ENCODE measurements at regions of chr3 and their contacts with region 1.

Region 1: GRCh38 chr3:100254168-100254777 is 6.5 kb upstream of the TBC1D23 start:
- DNase-seq: peak in 1 of 2 donors; percentile 81
- H3K4me3 ChIP-seq: no peak overlapping the region
- H3K27ac ChIP-seq: peak overlapping the region; percentile 44 to 63
- H3K4me1 ChIP-seq: peaks cover 0 to 9% of the 10 kb centered on the region in 2 donors
- H3K27me3 ChIP-seq: no peaks in the 10 kb centered on the region
- CTCF ChIP-seq: peak; percentile 80 to 93 (median 88)

Region 2: GRCh38 chr3:99833617-99834205 is 420.6 kb before region 1 on chr3:
- intact Hi-C with region 1: loop called (anchors 2 kb)
- DNase-seq: no peak
- H3K4me3 ChIP-seq: no peak overlapping the region
- H3K27ac ChIP-seq: peak overlapping the region; percentile 20 to 22
- H3K4me1 ChIP-seq: peaks cover 0 to 9% of the 10 kb centered on the region in 2 donors
- H3K27me3 ChIP-seq: no peaks in the 10 kb centered on the region
- CTCF ChIP-seq: no peak

Region 3: GRCh38 chr3:99842826-99843589 is 411.3 kb before region 1 on chr3:
- intact Hi-C with region 1: loop called (anchors 2 kb)
- DNase-seq: no peak
- H3K4me3 ChIP-seq: no peak overlapping the region
- H3K27ac ChIP-seq: peak overlapping the region; percentile 78 to 82
- H3K4me1 ChIP-seq: peaks cover 0 to 14% of the 10 kb centered on the region in 2 donors
- H3K27me3 ChIP-seq: no peaks in the 10 kb centered on the region
- CTCF ChIP-seq: peak; percentile 66 to 67 (median 67)

Region 4: DNA sequence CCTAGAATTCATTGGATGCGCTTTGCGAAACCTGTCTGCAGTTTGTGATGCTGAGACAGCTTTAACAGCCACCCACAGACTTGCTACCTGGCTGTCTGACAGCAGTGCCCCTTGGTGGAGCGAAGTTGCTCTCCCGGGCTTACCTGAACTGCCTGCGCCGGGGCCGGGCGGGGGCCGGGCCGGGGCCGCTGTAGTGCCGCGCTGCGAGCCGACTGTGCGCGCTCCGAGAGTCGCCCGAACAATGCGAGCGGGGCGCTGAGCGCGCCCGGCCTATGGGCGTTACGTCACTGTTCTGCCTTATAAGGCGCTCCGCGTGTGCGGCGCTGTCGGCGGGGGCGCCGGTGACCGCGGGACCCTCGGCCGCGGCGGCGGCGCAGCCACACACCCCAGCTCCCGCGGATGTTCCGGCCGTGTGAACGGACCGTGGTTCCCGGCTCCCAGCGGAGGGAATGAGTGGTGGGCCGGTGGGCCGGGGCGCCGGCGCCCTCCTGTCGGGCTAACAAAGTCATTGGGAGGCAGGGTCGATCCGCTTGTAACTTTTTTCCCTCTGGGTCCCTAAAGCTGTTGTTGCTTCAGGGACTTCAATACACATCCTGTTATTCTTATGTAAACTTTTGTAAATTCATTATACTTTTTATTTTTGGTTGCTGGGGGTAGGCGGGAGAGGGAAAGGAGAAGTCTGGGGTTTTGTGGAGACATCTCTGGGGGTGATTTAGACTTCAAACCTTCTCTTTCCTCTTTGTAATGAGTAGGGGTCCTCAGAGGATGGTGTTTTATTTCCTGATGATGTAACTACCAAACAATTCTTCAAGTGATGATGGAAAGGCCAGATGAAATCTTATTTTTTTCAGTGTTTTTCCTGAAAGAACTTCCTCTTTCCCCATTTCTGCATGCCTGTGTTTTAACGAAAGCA is 378.1 kb before region 1 on chr3:
- intact Hi-C with region 1: loop called (anchors 10 kb)
- DNase-seq: peak; percentile 39 to 91
- H3K4me3 ChIP-seq: peak overlapping the region; percentile 85 to 90
- H3K27ac ChIP-seq: peak overlapping the region; percentile 97 to 98
- H3K4me1 ChIP-seq: peaks cover 0 to 17% of the 10 kb centered on the region in 2 donors
- H3K27me3 ChIP-seq: no peaks in the 10 kb centered on the region
- CTCF ChIP-seq: no peak

Region 5: GRCh38 chr3:100047455-100048141 is 206.7 kb before region 1 on chr3:
- intact Hi-C with region 1: loop called (anchors 5 kb)
- DNase-seq: no peak
- H3K4me3 ChIP-seq: no peak overlapping the region
- H3K27ac ChIP-seq: peak overlapping the region; percentile 47 to 89
- H3K4me1 ChIP-seq: peaks cover 6 to 28% of the 10 kb centered on the region in 2 donors
- H3K27me3 ChIP-seq: no peaks in the 10 kb centered on the region
- CTCF ChIP-seq: no peak

Region 6: DNA sequence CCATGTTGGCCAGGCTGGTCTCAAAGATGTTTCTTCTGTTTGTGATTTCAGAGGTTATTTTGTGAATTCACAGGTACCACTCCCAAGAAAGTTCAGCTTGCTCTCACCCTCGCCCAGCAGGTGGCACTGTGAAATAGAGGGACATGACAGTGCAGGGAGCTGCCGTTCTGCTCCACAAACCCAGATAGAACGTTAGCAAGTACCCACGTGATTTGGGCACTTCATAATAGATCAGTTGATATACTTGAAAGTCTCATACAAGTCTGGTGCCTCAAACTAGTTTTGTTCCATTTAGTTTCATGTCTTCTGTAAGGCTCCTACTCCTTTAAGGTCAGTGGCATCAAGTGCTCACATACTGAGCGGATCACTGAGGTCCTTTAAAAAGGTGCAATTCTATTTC is 185.4 kb before region 1 on chr3:
- intact Hi-C with region 1: loop called (anchors 1 kb)
- DNase-seq: peak; percentile 54 to 93
- H3K4me3 ChIP-seq: peak overlapping the region in 1 of 2 donors; percentile 25
- H3K27ac ChIP-seq: peak overlapping the region; percentile 87 to 92
- H3K4me1 ChIP-seq: peaks cover 3 to 22% of the 10 kb centered on the region in 2 donors
- H3K27me3 ChIP-seq: no peaks in the 10 kb centered on the region
- CTCF ChIP-seq: peak; percentile 65 to 80 (median 78)